Activated naive CD4-positive, alpha-beta T cell treated with anti-CD3 and anti-CD28 coated beads for 36 hours (primary cell): ENCODE measurements at regions of chr20 and their contacts with region 1.

Region 1: GRCh38 chr20:50987592-50988210 is 29.1 kb downstream of the MOCS3 start:
- DNase-seq: peak; percentile 78
- H3K4me3 Mint-ChIP-seq: no peak overlapping the region
- H3K27ac Mint-ChIP-seq: no peak overlapping the region
- H3K4me1 Mint-ChIP-seq: no peaks in the 10 kb centered on the region
- H3K27me3 Mint-ChIP-seq: peaks cover 23% of the 10 kb centered on the region

Region 2: DNA sequence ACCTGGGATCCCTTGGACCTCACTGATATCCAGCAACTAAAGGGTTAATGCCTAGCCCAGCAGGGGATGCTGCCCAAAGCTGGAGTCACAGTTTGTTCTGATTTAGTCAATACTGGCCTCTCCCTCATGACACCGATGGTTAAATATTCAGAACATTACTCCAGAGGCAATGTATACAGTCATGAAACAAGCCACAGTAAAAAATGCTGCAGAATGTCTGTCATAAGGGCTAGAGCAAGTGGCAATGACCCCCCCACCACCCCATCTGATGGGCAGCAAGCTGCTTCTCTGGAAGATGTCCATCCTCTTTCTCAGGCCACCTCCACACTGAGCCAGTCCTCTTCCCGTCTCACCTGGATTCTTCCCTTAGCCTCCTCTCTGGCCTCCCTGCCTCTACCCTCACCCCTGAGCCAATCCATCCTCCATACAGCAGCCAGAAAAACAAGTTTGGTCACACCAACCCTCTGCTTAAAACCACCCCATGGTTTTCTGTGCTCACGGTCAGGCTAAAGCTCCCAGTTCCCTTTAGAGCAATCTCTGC is 134.3 kb after region 1 on chr20:
- CTCF ChIA-PET with region 1: no interaction called
- intact Hi-C with region 1: loop called (anchors 5 kb)
- DNase-seq: no peak
- H3K4me3 Mint-ChIP-seq: no peak overlapping the region
- H3K27ac Mint-ChIP-seq: no peak overlapping the region
- H3K4me1 Mint-ChIP-seq: peaks cover 16% of the 10 kb centered on the region
- H3K27me3 Mint-ChIP-seq: peaks cover 32% of the 10 kb centered on the region

Region 3: DNA sequence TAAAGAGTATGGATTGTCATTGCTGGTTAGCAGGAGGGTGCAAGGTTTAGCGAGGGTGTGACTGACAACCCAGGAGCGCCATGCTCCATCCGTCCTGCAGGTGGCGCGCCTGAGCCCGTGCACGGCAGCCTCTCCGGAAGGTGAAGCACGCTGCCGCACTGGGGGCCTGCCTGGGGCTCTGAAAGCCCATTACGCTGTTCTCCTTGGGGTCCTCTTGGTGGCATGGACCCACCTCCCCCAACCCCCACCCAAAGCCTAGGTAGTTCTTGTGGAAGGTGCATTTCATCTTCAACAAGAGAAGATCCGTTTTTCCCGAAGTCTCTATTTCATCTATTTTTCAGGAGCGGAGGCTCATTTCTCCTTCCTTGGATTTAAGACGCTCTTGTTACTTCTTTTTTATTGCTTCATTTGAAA is 232.6 kb after region 1 on chr20:
- CTCF ChIA-PET with region 1: interaction called, 8 read pairs
- intact Hi-C with region 1: loop called (anchors 2 kb)
- DNase-seq: peak; percentile 76
- H3K4me3 Mint-ChIP-seq: no peak overlapping the region
- H3K27ac Mint-ChIP-seq: no peak overlapping the region
- H3K4me1 Mint-ChIP-seq: peaks cover 15% of the 10 kb centered on the region
- H3K27me3 Mint-ChIP-seq: peaks cover 56% of the 10 kb centered on the region

Region 4: DNA sequence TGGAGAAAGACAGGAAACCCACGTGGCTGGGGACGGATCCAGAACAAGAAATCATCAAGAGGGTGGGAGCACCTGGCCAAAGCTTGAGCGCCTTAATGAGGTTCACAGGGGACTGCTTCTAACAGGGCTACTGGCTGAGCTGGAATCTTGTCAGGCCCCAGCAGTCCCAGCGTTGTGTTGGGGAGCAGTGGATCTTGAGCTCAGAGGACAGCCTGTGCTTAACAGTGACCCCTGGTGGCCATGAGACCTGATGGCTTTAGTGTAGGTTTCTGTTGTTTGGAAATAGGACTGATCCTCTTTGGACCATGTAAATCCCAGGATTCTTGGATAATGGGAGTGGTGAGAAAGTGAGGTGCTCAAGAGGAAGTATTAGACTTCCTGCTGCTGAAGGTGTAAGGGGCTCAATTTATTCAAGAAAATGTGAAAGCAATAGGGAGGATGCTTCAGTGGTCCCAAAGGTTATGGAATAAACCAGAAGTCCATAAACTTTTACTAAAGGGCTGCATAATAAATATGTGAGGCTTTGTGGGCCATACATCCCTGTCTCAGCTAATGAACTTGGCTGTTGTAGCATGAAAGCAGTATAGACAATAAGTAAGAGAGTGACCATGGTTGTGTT is 338.6 kb after region 1 on chr20:
- CTCF ChIA-PET with region 1: interaction called, 21 read pairs
- intact Hi-C with region 1: no loop called
- DNase-seq: peak; percentile 62
- H3K4me3 Mint-ChIP-seq: no peak overlapping the region
- H3K27ac Mint-ChIP-seq: no peak overlapping the region
- H3K4me1 Mint-ChIP-seq: no peaks in the 10 kb centered on the region
- H3K27me3 Mint-ChIP-seq: peaks cover 5% of the 10 kb centered on the region